Heart left ventricle (tissue), 16 donors: ENCODE measurements at regions of chr4 and their contacts with region 1.

Region 1: GRCh38 chr4:140533951-140534480 is 10.0 kb downstream of the ELMOD2 start:
- DNase-seq: no peak
- ATAC-seq: no peak
- H3K4me3 ChIP-seq: no peak overlapping the region
- H3K27ac ChIP-seq: no peak overlapping the region
- H3K4me1 ChIP-seq: peaks cover 0 to 9% (median 0%) of the 10 kb centered on the region in 12 donors
- H3K27me3 ChIP-seq: no peaks in the 10 kb centered on the region
- CTCF ChIP-seq: no peak
- POLR2A ChIP-seq: no peak

Region 2: GRCh38 chr4:140373328-140374129 is 160.5 kb before region 1 on chr4 and contains the start of gene SCOC:
- intact Hi-C with region 1: loop called in 7 of 10 experiments (anchors 5 to 10 kb)
- DNase-seq: peak; percentile 99 to 100 (median 99)
- ATAC-seq: peak; percentile 98 to 99 (median 99)
- H3K4me3 ChIP-seq: peak within 1 kb of the TSS; percentile 77 to 96 (median 84)
- H3K27ac ChIP-seq: peak within 1 kb of the TSS; percentile 76 to 96 (median 94)
- H3K4me1 ChIP-seq: peaks cover 0 to 52% (median 31%) of the 10 kb centered on the region in 12 donors
- H3K27me3 ChIP-seq: no peaks in the 10 kb centered on the region
- CTCF ChIP-seq: peak in 1 of 12 donors; percentile 9
- POLR2A ChIP-seq: peak in 1 of 2 donors; percentile 74
- total RNA-seq, gene SCOC: 61.0 to 80.9 (median 70.3) TPM

Region 3: DNA sequence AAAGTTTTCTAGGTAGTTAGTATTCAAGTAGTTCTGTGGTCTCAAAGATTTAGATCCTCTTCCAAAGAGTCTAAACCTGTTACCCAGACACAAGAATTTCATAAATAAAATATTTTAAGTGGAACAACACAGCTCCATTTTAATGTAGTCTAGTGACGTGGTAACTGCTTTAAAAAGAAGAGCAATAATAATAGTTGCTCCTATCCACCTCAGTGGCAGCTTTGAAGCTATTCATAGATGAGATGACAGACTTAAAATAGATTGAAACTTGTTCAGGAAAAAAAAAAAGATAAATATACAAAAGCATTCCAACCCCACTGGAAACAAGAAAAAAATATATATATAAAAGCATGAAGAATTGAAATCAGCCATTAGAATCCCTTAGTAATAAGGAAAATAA is 146.0 kb before region 1 on chr4:
- intact Hi-C with region 1: no loop called
- DNase-seq: no peak
- ATAC-seq: peak; percentile 44 to 72 (median 67)
- H3K4me3 ChIP-seq: no peak overlapping the region
- H3K27ac ChIP-seq: peak overlapping the region in 3 of 12 donors; percentile 11 to 18 (median 13)
- H3K4me1 ChIP-seq: peaks cover 0 to 7% (median 0%) of the 10 kb centered on the region in 12 donors
- H3K27me3 ChIP-seq: no peaks in the 10 kb centered on the region
- CTCF ChIP-seq: no peak
- POLR2A ChIP-seq: no peak